ENCODE measurements at regions of chr2 and their contacts with region 1.

Region 1: DNA sequence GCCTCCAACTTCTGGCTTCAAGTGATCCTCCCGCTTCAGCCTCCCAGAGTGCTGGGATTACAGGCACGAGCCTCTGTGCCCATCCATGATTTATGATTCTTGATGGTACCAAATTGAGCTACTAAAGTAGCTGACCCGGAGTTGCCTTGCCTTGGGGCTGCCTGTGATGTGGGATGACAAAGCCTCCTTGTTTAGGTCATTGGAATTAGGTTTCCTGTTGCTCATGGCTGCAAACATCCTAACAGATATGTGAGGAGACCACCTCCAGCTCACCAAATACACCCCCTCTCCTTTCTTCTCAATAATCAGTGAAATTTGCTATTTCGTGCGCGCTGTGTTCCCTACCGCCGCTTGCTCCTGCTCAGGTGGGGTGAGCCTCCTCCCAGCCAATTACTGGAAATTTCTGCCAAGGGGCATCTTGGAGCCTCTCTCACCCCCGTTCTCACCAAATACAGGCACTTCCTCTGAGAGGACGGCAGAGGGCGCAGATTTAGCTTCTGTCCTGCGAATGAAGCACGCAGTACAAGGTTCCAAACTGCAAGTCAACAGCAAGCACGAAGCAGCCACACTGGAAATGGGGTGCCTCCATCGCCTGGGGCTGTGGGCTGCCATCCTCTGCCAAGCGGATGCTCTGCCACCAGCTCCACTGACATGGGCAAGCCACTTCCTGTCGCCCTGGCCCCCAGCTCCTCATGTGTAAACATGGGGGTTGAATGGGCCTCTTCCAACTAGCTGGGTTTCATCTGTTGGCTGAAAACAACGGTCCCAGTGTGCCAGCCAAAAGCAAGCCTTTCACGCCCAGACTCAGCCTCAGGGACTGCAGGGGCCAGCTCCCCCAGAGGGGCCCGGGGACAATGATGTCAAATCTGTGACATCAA is 71.7 kb downstream of the NCAPH start:
- DNase-seq: peak; percentile 86 to 89 (median 88)
- H3K4me3 ChIP-seq: peak overlapping the region; percentile 14 to 21
- H3K4me3 Mint-ChIP-seq: peak overlapping the region; percentile 64 to 91 (median 86)
- H3K27ac ChIP-seq: peak overlapping the region; percentile 39
- H3K27ac Mint-ChIP-seq: peak overlapping the region; percentile 81 to 99 (median 97)
- H3K4me1 ChIP-seq: peaks cover 34% of the 10 kb centered on the region
- H3K4me1 Mint-ChIP-seq: peaks cover 22 to 39% (median 32%) of the 10 kb centered on the region in 4 donors
- H3K27me3 ChIP-seq: no peaks in the 10 kb centered on the region
- H3K27me3 Mint-ChIP-seq: no peaks in the 10 kb centered on the region

Region 2: DNA sequence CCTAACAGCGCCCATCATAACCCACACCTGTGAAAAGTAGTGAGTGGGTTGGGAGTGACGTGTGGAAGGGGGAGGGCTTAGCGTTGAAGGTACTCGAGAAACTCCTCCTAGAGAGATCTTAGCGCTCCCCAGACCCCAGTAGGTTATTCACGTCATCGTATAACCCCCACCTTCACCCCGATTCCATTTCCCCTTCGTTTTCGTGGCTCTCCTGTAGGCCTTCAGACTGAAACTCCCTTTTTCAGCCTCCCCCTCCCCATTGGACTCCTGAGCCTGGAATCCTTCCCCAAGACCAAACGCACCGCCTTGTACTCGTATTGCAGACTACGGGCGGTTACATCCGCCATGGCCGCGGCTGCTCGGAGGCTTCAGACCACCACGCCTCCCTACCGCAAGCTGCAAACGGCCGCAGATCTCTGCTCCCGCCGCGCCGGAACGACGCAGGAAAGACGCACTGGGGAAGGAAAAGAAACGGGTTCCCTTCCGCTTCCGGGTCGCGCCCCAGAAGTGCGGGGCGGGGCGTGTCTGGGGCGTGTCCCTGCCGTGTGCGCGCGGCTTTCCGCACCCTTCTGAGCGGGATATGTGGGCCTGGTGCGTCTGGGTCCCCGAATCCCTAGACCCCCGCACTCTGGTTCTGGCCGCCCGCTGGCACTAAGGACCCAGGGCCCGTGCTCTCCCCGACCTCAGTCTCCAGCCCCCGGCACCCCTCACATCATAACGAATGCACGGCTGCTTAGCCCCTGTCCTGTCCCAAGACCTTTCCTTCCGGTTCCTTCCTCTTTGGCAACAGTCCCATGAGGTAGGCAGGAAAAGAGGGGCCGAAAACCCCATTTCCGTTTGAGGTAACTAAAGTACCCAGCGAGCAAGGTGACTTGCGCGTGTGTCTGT is 101.9 kb before region 1 on chr2 and contains the start of gene SNRNP200:
- CTCF ChIA-PET with region 1: interaction called, 3 read pairs
- POLR2A ChIA-PET with region 1: interaction called, 11 read pairs
- intact Hi-C with region 1: no loop called
- DNase-seq: peak; percentile 91 to 95 (median 91)
- H3K4me3 ChIP-seq: peak within 1 kb of the TSS; percentile 80 to 99
- H3K4me3 Mint-ChIP-seq: peak within 1 kb of the TSS; percentile 97 to 100 (median 99)
- H3K27ac ChIP-seq: peak within 1 kb of the TSS; percentile 89
- H3K27ac Mint-ChIP-seq: peak within 1 kb of the TSS; percentile 98 to 100 (median 100)
- H3K4me1 ChIP-seq: peaks cover 48% of the 10 kb centered on the region
- H3K4me1 Mint-ChIP-seq: peaks cover 44 to 65% (median 54%) of the 10 kb centered on the region in 4 donors
- H3K27me3 ChIP-seq: no peaks in the 10 kb centered on the region
- H3K27me3 Mint-ChIP-seq: no peaks in the 10 kb centered on the region
- total RNA-seq, gene SNRNP200: 225 to 227 TPM

Region 3: GRCh38 chr2:96359310-96359709 is 48.0 kb before region 1 on chr2:
- CTCF ChIA-PET with region 1: interaction called, 12 read pairs
- POLR2A ChIA-PET with region 1: interaction called, 10 read pairs
- intact Hi-C with region 1: no loop called
- DNase-seq: peak in 4 of 5 donors; percentile 22 to 41 (median 38)
- H3K4me3 ChIP-seq: no peak overlapping the region
- H3K4me3 Mint-ChIP-seq: no peak overlapping the region
- H3K27ac ChIP-seq: peak overlapping the region; percentile 2
- H3K27ac Mint-ChIP-seq: peak overlapping the region; percentile 69 to 97 (median 93)
- H3K4me1 ChIP-seq: peaks cover 21% of the 10 kb centered on the region
- H3K4me1 Mint-ChIP-seq: peaks cover 13 to 20% (median 14%) of the 10 kb centered on the region in 4 donors
- H3K27me3 ChIP-seq: no peaks in the 10 kb centered on the region
- H3K27me3 Mint-ChIP-seq: no peaks in the 10 kb centered on the region

Region 4: DNA sequence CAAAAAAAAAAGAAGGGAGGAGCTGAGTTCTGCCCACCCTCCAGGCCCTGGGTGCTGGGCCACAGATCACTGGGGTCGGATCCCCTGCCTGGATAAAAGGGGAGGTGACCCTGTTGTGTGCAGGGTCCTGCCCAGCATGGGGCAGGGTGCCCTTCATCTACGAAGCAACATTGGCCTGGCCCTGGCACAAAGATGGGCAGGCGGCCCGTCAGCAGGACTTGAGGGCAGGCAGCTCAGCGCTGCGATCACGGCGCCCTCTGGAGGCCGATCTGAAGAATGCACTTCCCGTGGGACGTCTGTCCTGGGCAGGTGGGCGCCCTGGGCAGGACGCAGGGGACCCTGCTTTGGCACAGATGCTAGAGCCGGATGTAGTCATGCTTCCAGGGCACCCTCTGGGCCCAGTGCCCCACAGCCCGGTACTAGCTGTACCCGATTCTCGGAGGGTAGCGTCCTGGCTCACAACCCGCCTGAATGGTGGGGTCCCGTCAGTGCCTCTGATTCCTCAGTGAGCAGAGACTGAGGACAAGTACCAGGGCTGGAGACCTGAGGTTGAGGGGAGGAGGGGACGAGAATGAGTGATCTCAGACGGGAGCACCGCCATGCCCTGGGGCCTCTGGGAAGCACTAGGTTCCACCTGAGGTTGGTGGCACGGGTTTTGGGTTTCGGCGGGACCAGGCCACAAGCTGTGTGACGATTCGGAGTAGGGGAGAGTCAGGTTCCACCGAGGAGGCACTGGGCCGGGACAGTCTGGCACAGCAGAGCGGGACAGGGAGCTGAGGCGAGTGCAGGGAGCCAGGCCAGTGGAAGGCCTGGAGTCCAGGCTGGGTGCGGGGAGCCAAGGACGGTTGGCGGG is 147.2 kb after region 1 on chr2:
- CTCF ChIA-PET with region 1: interaction called, 59 read pairs
- POLR2A ChIA-PET with region 1: interaction called, 23 read pairs
- intact Hi-C with region 1: loop called (anchors 1 kb)
- DNase-seq: peak; percentile 46 to 80 (median 69)
- H3K4me3 ChIP-seq: no peak overlapping the region
- H3K4me3 Mint-ChIP-seq: peak overlapping the region in 7 of 8 donors; percentile 15 to 69 (median 32)
- H3K27ac ChIP-seq: no peak overlapping the region
- H3K27ac Mint-ChIP-seq: peak overlapping the region in 4 of 7 donors; percentile 22 to 86 (median 82)
- H3K4me1 ChIP-seq: peaks cover 17% of the 10 kb centered on the region
- H3K4me1 Mint-ChIP-seq: peaks cover 1 to 32% (median 12%) of the 10 kb centered on the region in 4 donors
- H3K27me3 ChIP-seq: no peaks in the 10 kb centered on the region
- H3K27me3 Mint-ChIP-seq: no peaks in the 10 kb centered on the region

Region 5: DNA sequence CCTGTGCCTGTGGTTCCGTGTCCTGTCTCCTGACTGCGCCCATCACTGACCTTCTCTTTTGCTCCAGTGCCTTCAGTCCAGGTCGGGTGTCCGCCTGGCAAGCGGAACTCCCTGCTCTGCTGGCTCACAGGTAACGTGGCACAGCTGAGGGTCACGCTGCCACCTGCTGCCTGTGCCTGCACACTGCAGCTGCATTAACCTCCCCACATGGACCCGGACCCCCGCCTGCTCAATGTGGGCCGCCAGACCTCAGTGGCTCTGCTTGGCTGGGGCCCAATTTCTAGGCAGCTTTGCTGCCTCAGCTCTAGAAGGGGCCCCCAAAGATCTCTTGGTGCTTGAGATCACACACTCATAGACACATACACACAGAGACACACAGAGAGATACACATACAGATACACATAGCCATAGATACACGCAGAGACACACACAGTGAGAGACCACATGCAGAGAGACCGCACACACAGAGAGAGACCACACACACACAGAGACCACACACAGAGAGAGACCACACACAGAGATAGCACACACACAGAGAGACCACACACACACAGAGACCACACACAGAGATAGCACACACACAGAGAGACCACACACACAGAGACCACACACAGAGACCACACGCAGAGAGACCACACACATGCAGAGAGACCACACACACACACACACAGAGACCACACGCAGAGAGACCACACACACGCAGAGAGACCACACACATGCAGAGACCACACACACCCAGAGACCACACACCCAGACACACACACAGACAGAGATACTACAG is 393.9 kb after region 1 on chr2:
- CTCF ChIA-PET with region 1: no interaction called
- POLR2A ChIA-PET with region 1: no interaction called
- intact Hi-C with region 1: loop called (anchors 10 kb)
- DNase-seq: peak; percentile 65 to 70 (median 65)
- H3K4me3 ChIP-seq: no peak overlapping the region
- H3K4me3 Mint-ChIP-seq: no peak overlapping the region
- H3K27ac ChIP-seq: no peak overlapping the region
- H3K27ac Mint-ChIP-seq: no peak overlapping the region
- H3K4me1 ChIP-seq: peaks cover 28% of the 10 kb centered on the region
- H3K4me1 Mint-ChIP-seq: peaks cover 3 to 7% (median 5%) of the 10 kb centered on the region in 4 donors
- H3K27me3 ChIP-seq: no peaks in the 10 kb centered on the region
- H3K27me3 Mint-ChIP-seq: no peaks in the 10 kb centered on the region

Measured in CD4-positive, alpha-beta memory T cell (primary cell).